Psoas muscle (tissue), 8 donors: ENCODE measurements at regions of chr9 and their contacts with region 1.

Region 1: GRCh38 chr9:133742849-133743444 is 4.8 kb upstream of the SARDH start:
- DNase-seq: peak; percentile 68 to 78
- ATAC-seq: peak; percentile 60 to 83 (median 80)
- H3K4me3 ChIP-seq: no peak overlapping the region
- H3K27ac ChIP-seq: no peak overlapping the region
- H3K4me1 ChIP-seq: no peaks in the 10 kb centered on the region
- H3K27me3 ChIP-seq: no peaks in the 10 kb centered on the region
- CTCF ChIP-seq: peak; percentile 96

Region 2: DNA sequence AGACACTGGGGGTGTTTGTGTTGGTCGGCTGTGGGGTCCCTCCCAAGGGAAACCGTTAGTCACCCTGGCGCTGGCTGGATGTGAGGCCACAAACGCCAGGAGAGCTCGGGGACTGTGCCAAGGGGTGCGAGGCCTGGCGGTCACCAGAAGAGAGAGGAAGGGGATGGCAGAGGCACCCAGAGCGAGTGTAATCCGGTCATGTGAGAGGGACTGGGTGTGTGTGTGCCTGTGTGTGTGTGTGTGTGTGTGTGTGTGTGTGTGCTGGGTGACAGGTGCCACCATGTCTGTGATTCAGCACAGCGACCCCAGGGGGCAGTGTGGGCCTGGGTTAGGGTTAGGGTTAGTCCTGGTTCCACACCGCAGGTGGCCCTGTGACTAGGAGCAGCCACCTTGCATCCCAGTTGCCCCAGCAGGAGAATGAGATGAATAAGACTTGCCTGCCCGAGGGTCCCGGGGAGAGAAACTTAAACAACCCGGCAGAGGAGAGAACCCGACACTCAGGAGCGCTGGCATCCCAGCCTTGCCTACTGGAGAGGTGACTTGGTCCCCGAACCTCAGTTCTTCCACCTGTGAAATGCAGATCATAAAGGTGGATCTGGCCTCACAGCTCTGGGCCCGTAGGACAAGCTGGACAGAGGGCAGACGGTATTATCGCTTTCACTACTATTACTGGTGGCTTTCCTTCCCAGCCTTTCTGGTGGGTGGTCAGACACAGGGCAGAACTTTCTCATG is 209.8 kb before region 1 on chr9:
- intact Hi-C with region 1: loop called in 1 of 2 experiments (anchors 5 kb)
- DNase-seq: peak; percentile 68 to 83
- ATAC-seq: peak; percentile 38 to 62 (median 46)
- H3K4me3 ChIP-seq: no peak overlapping the region
- H3K27ac ChIP-seq: no peak overlapping the region
- H3K4me1 ChIP-seq: peaks cover 8% of the 10 kb centered on the region
- H3K27me3 ChIP-seq: peaks cover 0 to 67% (median 8%) of the 10 kb centered on the region in 3 donors
- CTCF ChIP-seq: peak; percentile 27